PC-3 (cell line): ENCODE measurements at regions of chr2 and their contacts with region 1.

Region 1: DNA sequence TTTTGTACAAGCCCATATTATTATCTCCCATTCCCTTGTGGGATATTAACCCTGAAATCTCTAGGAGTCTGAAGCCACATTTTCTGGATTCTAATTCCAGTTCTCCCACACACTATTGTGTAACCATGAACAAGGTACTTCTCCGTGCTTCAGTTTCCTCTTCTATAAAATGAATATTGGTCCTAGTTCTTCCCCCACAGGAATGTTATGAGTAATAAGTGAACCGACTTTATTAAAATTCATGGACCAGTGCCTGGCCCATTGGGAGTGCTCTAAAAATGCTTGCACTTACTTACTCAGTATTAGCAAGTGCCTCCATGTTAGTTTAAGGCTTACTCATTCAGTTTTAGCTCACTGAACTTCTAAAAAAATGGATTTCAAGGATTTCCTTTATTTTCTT is 1.4 kb upstream of the ACMSD start:
- DNase-seq: peak; percentile 97
- ATAC-seq: peak; percentile 98
- H3K4me3 ChIP-seq: 0 out of 2 replicates have a peak overlapping the region, but pooled peaks have one; percentile 1
- H3K27ac ChIP-seq: peak overlapping the region; percentile 93
- H3K4me1 ChIP-seq: peaks cover 23% of the 10 kb centered on the region
- H3K27me3 ChIP-seq: no peaks in the 10 kb centered on the region
- CTCF ChIP-seq: no peak

Region 2: GRCh38 chr2:134586326-134586965 is 250.5 kb before region 1 on chr2:
- CTCF ChIA-PET with region 1: no interaction called
- POLR2A ChIA-PET with region 1: no interaction called
- intact Hi-C with region 1: no loop called
- DNase-seq: no peak
- ATAC-seq: no peak
- H3K4me3 ChIP-seq: no peak overlapping the region
- H3K27ac ChIP-seq: no peak overlapping the region
- H3K4me1 ChIP-seq: no peaks in the 10 kb centered on the region
- H3K27me3 ChIP-seq: no peaks in the 10 kb centered on the region
- CTCF ChIP-seq: no peak

Region 3: GRCh38 chr2:134799936-134800335 is 37.0 kb before region 1 on chr2:
- CTCF ChIA-PET with region 1: no interaction called
- POLR2A ChIA-PET with region 1: no interaction called
- intact Hi-C with region 1: loop called (anchors 5 kb)
- DNase-seq: no peak
- ATAC-seq: no peak
- H3K4me3 ChIP-seq: no peak overlapping the region
- H3K27ac ChIP-seq: no peak overlapping the region
- H3K4me1 ChIP-seq: no peaks in the 10 kb centered on the region
- H3K27me3 ChIP-seq: no peaks in the 10 kb centered on the region
- CTCF ChIP-seq: no peak

Region 4: GRCh38 chr2:135948642-135949355 is 1111.8 kb after region 1 on chr2:
- CTCF ChIA-PET with region 1: no interaction called
- POLR2A ChIA-PET with region 1: no interaction called
- intact Hi-C with region 1: loop called (anchors 5 kb)
- DNase-seq: peak; percentile 89
- ATAC-seq: peak; percentile 84
- H3K4me3 ChIP-seq: peak overlapping the region; percentile 60
- H3K27ac ChIP-seq: peak overlapping the region; percentile 93
- H3K4me1 ChIP-seq: peaks cover 30% of the 10 kb centered on the region
- H3K27me3 ChIP-seq: no peaks in the 10 kb centered on the region
- CTCF ChIP-seq: no peak